PC-9 (cell line): ENCODE measurements at regions of chr1 and their contacts with region 1.

Region 1: GRCh38 chr1:25874934-25875855 is at the start of gene PAQR7:
- DNase-seq: peak; percentile 38 to 85
- H3K4me3 ChIP-seq: peak within 1 kb of the TSS; percentile 71
- H3K27ac ChIP-seq: peak within 1 kb of the TSS; percentile 71
- H3K4me1 ChIP-seq: peaks cover 46% of the 10 kb centered on the region
- H3K27me3 ChIP-seq: no peaks in the 10 kb centered on the region
- CTCF ChIP-seq: no peak
- total RNA-seq, gene PAQR7: 30.2 and 34.0 TPM in 2 replicates

Region 2: GRCh38 chr1:25858906-25859789 is 16.0 kb before region 1 on chr1 and contains the start of gene AUNIP:
- CTCF ChIA-PET with region 1: interaction called, 3 read pairs
- POLR2A ChIA-PET with region 1: no interaction called
- intact Hi-C with region 1: loop called (anchors 2 kb)
- DNase-seq: peak; percentile 64 to 89
- H3K4me3 ChIP-seq: peak within 1 kb of the TSS; percentile 99
- H3K27ac ChIP-seq: peak within 1 kb of the TSS; percentile 74
- H3K4me1 ChIP-seq: peaks cover 10% of the 10 kb centered on the region
- H3K27me3 ChIP-seq: no peaks in the 10 kb centered on the region
- CTCF ChIP-seq: no peak
- total RNA-seq, gene AUNIP: 11.0 and 11.3 TPM in 2 replicates

Region 3: GRCh38 chr1:25890239-25891034 is 15.2 kb after region 1 on chr1:
- CTCF ChIA-PET with region 1: interaction called, 8 read pairs
- POLR2A ChIA-PET with region 1: interaction called, 28 read pairs
- intact Hi-C with region 1: loop called (anchors 1 kb)
- DNase-seq: peak; percentile 91 to 97
- H3K4me3 ChIP-seq: peak overlapping the region; percentile 47
- H3K27ac ChIP-seq: peak overlapping the region; percentile 96
- H3K4me1 ChIP-seq: peaks cover 61% of the 10 kb centered on the region
- H3K27me3 ChIP-seq: no peaks in the 10 kb centered on the region
- CTCF ChIP-seq: no peak